Heart left ventricle (tissue), 16 donors: ENCODE measurements at regions of chr4 and their contacts with region 1.

Region 1: GRCh38 chr4:142353149-142353738 is 492.9 kb downstream of the INPP4B start:
- DNase-seq: peak in 1 of 5 donors; percentile 15
- ATAC-seq: peak in 3 of 4 donors; percentile 16 to 64 (median 46)
- H3K4me3 ChIP-seq: no peak overlapping the region
- H3K27ac ChIP-seq: peak overlapping the region in 8 of 12 donors; percentile 8 to 62 (median 47)
- H3K4me1 ChIP-seq: peaks cover under 1 to 76% (median 58%) of the 10 kb centered on the region in 12 donors
- H3K27me3 ChIP-seq: no peaks in the 10 kb centered on the region
- CTCF ChIP-seq: peak; percentile 74 to 97 (median 92)
- POLR2A ChIP-seq: no peak

Region 2: GRCh38 chr4:142126890-142127497 is 226.2 kb before region 1 on chr4:
- intact Hi-C with region 1: loop called in 5 of 10 experiments (anchors 5 to 10 kb)
- DNase-seq: peak in 4 of 5 donors; percentile 25 to 57 (median 42)
- ATAC-seq: peak in 3 of 4 donors; percentile 37 to 64 (median 62)
- H3K4me3 ChIP-seq: no peak overlapping the region
- H3K27ac ChIP-seq: no peak overlapping the region
- H3K4me1 ChIP-seq: peaks cover 0 to 42% (median 14%) of the 10 kb centered on the region in 12 donors
- H3K27me3 ChIP-seq: no peaks in the 10 kb centered on the region
- CTCF ChIP-seq: peak; percentile 67 to 97 (median 84)
- POLR2A ChIP-seq: no peak

Region 3: GRCh38 chr4:142405021-142405694 is 51.9 kb after region 1 on chr4:
- intact Hi-C with region 1: loop called in 5 of 10 experiments (anchors 1 to 5 kb)
- DNase-seq: peak in 4 of 5 donors; percentile 45 to 64 (median 50)
- ATAC-seq: peak; percentile 59 to 82 (median 75)
- H3K4me3 ChIP-seq: peak overlapping the region; percentile 11 to 67 (median 56)
- H3K27ac ChIP-seq: peak overlapping the region; percentile 37 to 90 (median 76)
- H3K4me1 ChIP-seq: peaks cover 0 to 61% (median 40%) of the 10 kb centered on the region in 12 donors
- H3K27me3 ChIP-seq: no peaks in the 10 kb centered on the region
- CTCF ChIP-seq: no peak
- POLR2A ChIP-seq: no peak

Region 4: GRCh38 chr4:142414336-142414990 is 61.2 kb after region 1 on chr4:
- intact Hi-C with region 1: loop called in 1 of 10 experiments (anchors 5 kb)
- DNase-seq: no peak
- ATAC-seq: no peak
- H3K4me3 ChIP-seq: no peak overlapping the region
- H3K27ac ChIP-seq: no peak overlapping the region
- H3K4me1 ChIP-seq: peaks cover 0 to 16% (median 4%) of the 10 kb centered on the region in 12 donors
- H3K27me3 ChIP-seq: no peaks in the 10 kb centered on the region
- CTCF ChIP-seq: no peak
- POLR2A ChIP-seq: no peak

Region 5: GRCh38 chr4:142826503-142827241 is 473.4 kb after region 1 on chr4:
- intact Hi-C with region 1: loop called in 1 of 10 experiments (anchors 5 kb)
- DNase-seq: no peak
- ATAC-seq: peak in 3 of 4 donors; percentile 27 to 70 (median 41)
- H3K4me3 ChIP-seq: no peak overlapping the region
- H3K27ac ChIP-seq: peak overlapping the region in 2 of 12 donors; percentile 33 to 40
- H3K4me1 ChIP-seq: peaks cover 0 to 20% (median 0%) of the 10 kb centered on the region in 12 donors
- H3K27me3 ChIP-seq: no peaks in the 10 kb centered on the region
- CTCF ChIP-seq: no peak
- POLR2A ChIP-seq: no peak

Region 6: GRCh38 chr4:142840516-142841123 is 487.4 kb after region 1 on chr4:
- intact Hi-C with region 1: loop called in 9 of 10 experiments (anchors 5 to 10 kb)
- DNase-seq: no peak
- ATAC-seq: no peak
- H3K4me3 ChIP-seq: no peak overlapping the region
- H3K27ac ChIP-seq: no peak overlapping the region
- H3K4me1 ChIP-seq: peaks cover 0 to 15% (median 0%) of the 10 kb centered on the region in 12 donors
- H3K27me3 ChIP-seq: peaks cover 0 to 17% (median 0%) of the 10 kb centered on the region in 9 donors
- CTCF ChIP-seq: peak; percentile 46 to 73 (median 66)
- POLR2A ChIP-seq: no peak